Endothelial cell of umbilical vein (primary cell): ENCODE measurements at regions of chr14 and their contacts with region 1.

Region 1: GRCh38 chr14:24058260-24058950 is 6.6 kb downstream of the CARMIL3 start:
- DNase-seq: peak; percentile 44
- H3K4me3 ChIP-seq: no peak overlapping the region
- H3K27ac ChIP-seq: no peak overlapping the region
- H3K4me1 ChIP-seq: no peaks in the 10 kb centered on the region
- H3K27me3 ChIP-seq: no peaks in the 10 kb centered on the region
- CTCF ChIP-seq: peak; percentile 62 to 64
- POLR2A ChIP-seq: no peak

Region 2: DNA sequence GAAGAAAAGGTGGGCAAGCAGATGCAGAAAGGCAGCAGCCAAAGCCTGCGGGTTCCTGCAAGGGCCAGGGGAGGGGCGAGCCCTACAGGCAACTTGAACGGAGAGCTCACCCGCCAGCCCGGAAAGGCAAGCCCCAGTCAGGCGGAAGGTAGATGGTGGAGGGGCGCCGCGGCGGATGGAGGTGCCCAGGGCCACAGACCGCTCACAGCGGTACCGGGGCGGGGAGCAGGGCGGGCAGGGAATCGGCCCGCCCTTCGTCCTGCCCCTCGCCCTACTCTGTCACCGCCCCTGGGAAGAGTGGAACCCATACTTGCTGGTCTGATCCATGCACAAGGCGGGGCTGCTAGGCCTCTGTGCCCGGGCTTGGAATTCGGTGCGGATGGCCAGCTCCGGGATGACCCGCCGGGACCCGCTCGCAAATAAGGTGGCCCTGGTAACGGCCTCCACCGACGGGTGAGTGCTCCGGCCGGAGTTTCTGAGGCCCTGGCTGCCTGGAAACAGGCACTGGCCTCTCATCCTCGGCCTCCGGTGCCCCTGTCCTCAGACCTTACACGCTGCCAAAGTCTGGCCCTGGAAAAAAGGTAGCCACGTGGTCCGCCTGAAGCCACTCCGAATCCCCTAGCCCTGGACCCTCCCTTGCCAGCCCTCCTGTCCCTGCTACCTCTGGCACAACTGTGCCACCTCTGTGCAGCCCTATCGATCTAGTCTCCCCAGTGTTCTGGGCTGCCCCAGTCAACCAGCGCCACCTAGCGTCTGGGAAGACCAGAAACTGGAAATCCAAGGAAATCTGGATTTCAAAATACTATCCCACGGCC is 104.7 kb before region 1 on chr14 and contains the start of gene DHRS4:
- CTCF ChIA-PET with region 1: no interaction called
- POLR2A ChIA-PET with region 1: no interaction called
- dilution Hi-C with region 1: no loop called
- intact Hi-C with region 1: no loop called
- DNase-seq: peak; percentile 82
- H3K4me3 ChIP-seq: peak within 1 kb of the TSS; percentile 67 to 80 (median 72)
- H3K27ac ChIP-seq: peak within 1 kb of the TSS; percentile 44
- H3K4me1 ChIP-seq: no peaks in the 10 kb centered on the region
- H3K27me3 ChIP-seq: no peaks in the 10 kb centered on the region
- CTCF ChIP-seq: peak; percentile 85 to 88
- POLR2A ChIP-seq: peak; percentile 85
- total RNA-seq, gene DHRS4: 19.2 and 24.4 TPM in 2 replicates

Region 3: GRCh38 chr14:24070285-24071143 is 12.1 kb after region 1 on chr14:
- CTCF ChIA-PET with region 1: interaction called, 36 read pairs
- POLR2A ChIA-PET with region 1: no interaction called
- dilution Hi-C with region 1: no loop called
- intact Hi-C with region 1: no loop called
- DNase-seq: no peak
- H3K4me3 ChIP-seq: no peak overlapping the region
- H3K27ac ChIP-seq: no peak overlapping the region
- H3K4me1 ChIP-seq: no peaks in the 10 kb centered on the region
- H3K27me3 ChIP-seq: no peaks in the 10 kb centered on the region
- CTCF ChIP-seq: no peak
- POLR2A ChIP-seq: no peak

Region 4: DNA sequence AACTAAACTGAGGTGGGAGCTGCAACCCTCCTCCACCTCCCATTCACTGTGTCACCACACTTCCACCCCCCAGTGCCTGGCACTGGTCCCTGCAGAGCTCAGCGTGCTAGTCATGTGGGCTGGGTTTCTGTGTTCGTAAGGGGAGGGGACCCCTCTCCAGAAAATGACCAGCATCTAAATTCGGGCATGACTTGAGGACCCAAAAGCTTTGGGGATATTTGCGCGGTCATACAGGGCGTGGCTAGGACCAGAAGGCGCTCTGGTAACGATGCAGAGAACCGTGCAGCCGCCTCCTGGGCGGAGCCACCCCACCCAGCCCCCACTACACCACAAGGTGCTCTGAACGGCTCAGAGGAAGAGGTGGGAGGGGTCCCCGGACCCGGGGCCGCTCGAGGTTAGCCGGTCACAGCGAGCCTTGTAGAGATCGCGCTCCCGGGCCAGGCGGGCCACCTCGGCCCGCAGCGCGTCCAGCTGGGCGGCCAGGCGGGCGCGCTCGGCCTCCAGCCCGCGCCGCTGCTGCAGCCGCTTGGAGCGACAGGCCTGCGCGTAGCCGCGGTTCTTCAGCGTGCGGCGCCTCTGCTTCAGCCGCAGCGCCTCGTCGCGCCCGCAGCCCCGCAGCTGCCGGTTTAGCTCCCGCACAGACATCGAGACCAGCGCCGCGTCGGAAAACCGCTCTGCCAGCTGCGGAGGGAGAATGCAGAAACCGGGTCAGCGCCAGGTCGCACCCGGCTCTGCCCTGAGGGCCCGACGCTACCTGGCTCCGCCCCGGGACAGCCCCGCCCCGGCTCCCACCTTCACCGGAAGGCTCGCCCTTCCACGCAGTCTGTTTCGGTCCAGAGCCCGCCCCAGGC is 22.7 kb after region 1 on chr14:
- CTCF ChIA-PET with region 1: interaction called, 51 read pairs
- POLR2A ChIA-PET with region 1: no interaction called
- dilution Hi-C with region 1: no loop called
- intact Hi-C with region 1: no loop called
- DNase-seq: peak; percentile 7
- H3K4me3 ChIP-seq: peak overlapping the region; percentile 1 to 31 (median 25)
- H3K27ac ChIP-seq: no peak overlapping the region
- H3K4me1 ChIP-seq: no peaks in the 10 kb centered on the region
- H3K27me3 ChIP-seq: peaks cover 28 to 35% of the 10 kb centered on the region in 2 experiments
- CTCF ChIP-seq: no peak
- POLR2A ChIP-seq: no peak

Region 5: DNA sequence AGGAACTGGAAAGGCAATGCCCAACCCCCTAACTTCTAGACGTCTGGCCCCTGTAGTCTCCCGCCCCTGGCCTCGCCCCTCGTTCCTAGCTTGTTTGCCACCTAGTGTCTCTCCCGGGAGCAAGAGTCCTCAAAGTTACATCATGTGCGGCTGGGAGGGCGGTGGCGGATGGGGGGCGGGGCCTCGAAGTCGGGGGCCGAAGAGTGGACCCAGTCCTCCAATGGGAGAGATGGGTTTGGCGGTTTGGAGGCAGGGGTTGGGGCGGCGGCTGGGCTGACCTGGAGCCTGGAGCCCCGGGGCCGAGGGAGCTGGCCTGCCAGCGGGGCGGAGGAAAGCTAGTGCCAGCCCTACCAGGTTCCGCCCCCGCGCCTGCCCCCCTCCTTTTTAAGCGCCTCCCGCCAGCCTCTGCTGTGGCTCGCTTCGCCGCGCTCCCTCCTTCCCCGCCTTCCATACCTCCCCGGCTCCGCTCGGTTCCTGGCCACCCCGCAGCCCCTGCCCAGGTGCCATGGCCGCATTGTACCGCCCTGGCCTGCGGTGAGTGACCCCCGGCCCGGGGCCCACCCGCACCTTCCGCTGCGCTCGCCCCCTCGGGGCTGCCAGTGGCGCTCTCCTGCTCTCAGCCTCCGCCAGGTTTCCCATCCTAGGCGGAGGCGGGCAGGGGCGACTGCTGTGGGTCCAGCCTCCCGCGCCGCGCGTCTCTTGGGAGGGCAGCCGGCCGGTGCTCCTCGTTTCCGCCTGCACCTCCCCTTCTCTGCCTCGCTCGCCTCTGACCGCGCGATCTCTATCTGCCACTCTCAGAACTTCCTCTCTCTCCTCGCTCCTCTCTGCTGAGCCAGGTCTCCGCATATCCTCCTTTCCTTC is 35.7 kb after region 1 on chr14 and contains the start of gene PCK2:
- CTCF ChIA-PET with region 1: interaction called, 319 read pairs
- POLR2A ChIA-PET with region 1: interaction called, 8 read pairs
- dilution Hi-C with region 1: no loop called
- intact Hi-C with region 1: loop called (anchors 1 kb)
- DNase-seq: peak; percentile 72
- H3K4me3 ChIP-seq: peak within 1 kb of the TSS; percentile 71 to 82 (median 74)
- H3K27ac ChIP-seq: peak within 1 kb of the TSS; percentile 46
- H3K4me1 ChIP-seq: peaks cover 9% of the 10 kb centered on the region
- H3K27me3 ChIP-seq: no peaks in the 10 kb centered on the region
- CTCF ChIP-seq: peak in 1 of 2 donors; percentile 9
- POLR2A ChIP-seq: peak; percentile 77
- total RNA-seq, gene PCK2: 24.5 and 25.1 TPM in 2 replicates

Region 6: DNA sequence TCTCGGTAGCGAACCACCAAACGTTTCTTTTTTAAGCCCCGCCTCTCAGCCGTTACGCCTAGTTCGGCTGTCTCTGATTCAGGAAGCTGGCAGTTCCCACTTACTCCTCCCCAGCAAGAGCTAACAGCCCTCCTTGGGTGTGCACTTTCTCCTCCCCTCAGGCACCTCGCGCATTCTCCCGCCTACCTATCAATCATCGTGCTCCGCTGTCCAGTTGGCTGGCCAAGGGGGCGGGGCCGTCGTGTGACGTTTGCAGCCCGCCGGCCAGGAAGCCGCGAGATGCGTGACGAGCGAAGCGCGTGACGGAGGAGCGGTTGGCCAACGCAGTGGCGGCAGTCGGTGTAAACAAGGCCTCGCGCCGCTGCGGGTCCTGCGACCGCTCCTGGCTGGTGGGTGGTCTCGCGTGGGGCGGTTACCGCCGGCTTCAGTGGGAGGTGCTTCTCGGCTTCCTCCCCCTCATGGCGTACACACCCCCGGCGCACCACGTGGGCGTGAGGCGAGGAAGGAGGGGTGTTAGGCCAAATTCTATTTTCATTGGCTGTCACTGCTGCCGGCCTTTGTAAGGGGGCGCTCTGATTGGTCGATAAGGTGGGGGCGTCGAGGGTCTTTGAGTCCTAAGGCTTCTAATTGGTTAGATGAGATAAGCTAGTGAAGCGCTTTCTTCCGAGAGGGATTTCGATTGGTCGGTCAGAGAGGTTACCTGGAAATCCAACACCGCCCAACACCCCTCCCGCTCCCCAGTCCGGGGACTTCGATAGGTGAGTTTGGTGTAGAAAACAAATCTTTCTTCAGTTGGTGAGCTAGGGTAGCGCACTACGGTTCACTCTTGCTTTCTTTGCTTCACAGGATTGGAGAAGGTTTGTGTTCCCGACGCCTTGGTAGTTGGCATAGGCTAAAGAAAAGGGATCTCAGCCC is 56.4 kb after region 1 on chr14 and contains the starts of genes DCAF11 and NRL:
- CTCF ChIA-PET with region 1: interaction called, 420 read pairs
- POLR2A ChIA-PET with region 1: no interaction called
- dilution Hi-C with region 1: no loop called
- intact Hi-C with region 1: no loop called
- DNase-seq: peak; percentile 100
- H3K4me3 ChIP-seq: peak within 1 kb of the TSS; percentile 46 to 92 (median 84)
- H3K27ac ChIP-seq: peak within 1 kb of the TSS; percentile 88
- H3K4me1 ChIP-seq: peaks cover 13% of the 10 kb centered on the region
- H3K27me3 ChIP-seq: no peaks in the 10 kb centered on the region
- CTCF ChIP-seq: no peak
- POLR2A ChIP-seq: peak; percentile 39
- total RNA-seq, gene DCAF11: 32.1 and 38.5 TPM in 2 replicates
- total RNA-seq, gene NRL: 0.62 and 0.71 TPM in 2 replicates

Region 7: DNA sequence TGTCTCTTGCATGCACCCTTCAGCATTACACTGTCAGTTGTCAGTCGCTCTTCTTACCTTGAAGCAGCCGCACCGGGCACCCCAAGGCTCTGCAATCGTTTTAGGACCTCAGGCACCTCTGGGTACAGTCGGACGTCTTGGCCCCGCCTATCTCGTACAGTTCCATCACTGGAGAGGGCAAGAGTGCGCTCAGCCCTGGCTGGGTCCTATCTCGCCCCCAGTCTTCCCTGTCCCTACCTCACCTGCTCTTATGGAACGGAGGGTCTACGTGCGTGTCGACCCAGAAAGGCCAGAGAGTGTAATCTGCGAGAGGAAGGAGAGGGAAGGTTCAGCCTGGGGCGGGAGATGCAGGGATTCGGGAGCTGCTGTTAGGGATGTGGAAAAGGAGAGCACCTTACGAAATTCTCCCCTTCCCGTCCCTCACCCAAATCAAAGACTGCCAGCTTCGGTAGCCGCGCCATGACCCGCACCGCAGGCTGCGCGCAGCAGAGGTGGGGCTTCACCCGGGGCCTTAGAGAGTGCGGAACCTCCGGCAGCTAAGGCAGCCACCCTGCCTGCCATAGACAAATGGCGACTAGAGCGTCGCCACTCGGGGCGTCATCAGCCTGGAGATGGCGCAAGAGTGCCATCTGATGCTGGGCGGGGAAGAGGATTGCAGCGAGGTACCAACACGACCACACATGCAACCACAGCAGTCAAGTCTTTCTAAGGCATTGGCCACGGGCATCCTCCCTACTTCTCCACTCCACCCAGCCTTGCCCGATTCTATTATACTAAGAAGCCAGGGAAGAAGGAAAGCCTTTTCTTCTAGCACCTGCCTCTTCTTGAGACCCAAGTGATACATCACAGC is 157.3 kb after region 1 on chr14 and contains the start of gene MDP1:
- CTCF ChIA-PET with region 1: interaction called, 11 read pairs
- POLR2A ChIA-PET with region 1: no interaction called
- dilution Hi-C with region 1: no loop called
- intact Hi-C with region 1: loop called (anchors 5 kb)
- DNase-seq: peak; percentile 91
- H3K4me3 ChIP-seq: peak within 1 kb of the TSS; percentile 57 to 69 (median 64)
- H3K27ac ChIP-seq: peak within 1 kb of the TSS; percentile 61
- H3K4me1 ChIP-seq: peaks cover 11% of the 10 kb centered on the region
- H3K27me3 ChIP-seq: no peaks in the 10 kb centered on the region
- CTCF ChIP-seq: peak; percentile 84 to 86
- POLR2A ChIP-seq: peak; percentile 88
- total RNA-seq, gene MDP1: 8.1 and 9.9 TPM in 2 replicates